Activated naive CD4-positive, alpha-beta T cell treated with anti-CD3 and anti-CD28 coated beads for 36 hours (primary cell): ENCODE measurements at regions of chr5 and their contacts with region 1.

Region 1: GRCh38 chr5:126808521-126808988 is 31.6 kb downstream of the LMNB1 start:
- DNase-seq: no peak
- H3K4me3 Mint-ChIP-seq: no peak overlapping the region
- H3K27ac Mint-ChIP-seq: peak overlapping the region; percentile 98
- H3K4me1 Mint-ChIP-seq: peaks cover 60% of the 10 kb centered on the region
- H3K27me3 Mint-ChIP-seq: no peaks in the 10 kb centered on the region

Region 2: DNA sequence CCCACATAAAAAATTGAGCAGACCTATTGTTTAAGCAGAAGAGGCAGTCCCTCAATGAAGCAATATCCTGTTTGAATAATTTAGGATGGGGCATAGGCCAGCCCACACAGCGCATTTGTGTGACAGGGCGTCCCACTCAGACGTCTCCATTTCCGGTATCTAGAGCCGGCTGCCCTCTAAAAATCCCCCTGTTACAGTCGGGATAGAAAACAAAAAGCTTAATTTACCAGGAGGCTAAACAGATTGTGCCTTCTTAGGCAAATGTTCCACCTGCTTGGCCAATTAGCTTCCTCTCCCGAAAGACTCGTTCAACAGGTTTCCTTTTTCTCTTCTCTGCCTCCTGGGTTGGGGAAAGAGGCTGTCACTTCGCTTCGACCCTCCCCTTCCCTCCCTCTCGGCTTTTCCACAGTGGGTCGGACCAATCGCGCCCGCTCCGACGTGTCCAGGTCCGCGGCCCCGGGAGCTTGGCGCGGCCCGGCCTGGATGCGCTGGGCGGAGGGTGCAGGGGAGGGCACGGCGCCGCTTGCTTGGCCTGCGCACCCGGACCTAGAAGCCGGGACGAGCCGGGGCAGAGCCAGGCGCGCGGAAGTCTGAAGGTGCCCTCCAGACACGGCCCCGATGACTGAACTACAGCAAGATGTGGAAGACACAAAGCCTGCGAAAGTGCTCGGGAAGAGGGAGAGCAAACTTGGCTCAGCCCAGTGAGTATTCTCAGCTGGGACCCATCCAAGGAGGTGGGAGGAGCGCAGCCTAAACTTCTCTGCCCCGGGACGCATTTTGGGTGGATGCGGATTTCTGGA is 385.4 kb before region 1 on chr5 and contains the start of gene GRAMD2B:
- CTCF ChIA-PET with region 1: no interaction called
- intact Hi-C with region 1: loop called (anchors 1 kb)
- DNase-seq: peak; percentile 87
- H3K4me3 Mint-ChIP-seq: peak within 1 kb of the TSS; percentile 81
- H3K27ac Mint-ChIP-seq: peak within 1 kb of the TSS; percentile 88
- H3K4me1 Mint-ChIP-seq: peaks cover 29% of the 10 kb centered on the region
- H3K27me3 Mint-ChIP-seq: no peaks in the 10 kb centered on the region
- total RNA-seq, gene GRAMD2B: 8.7 to 10.8 TPM

Region 3: DNA sequence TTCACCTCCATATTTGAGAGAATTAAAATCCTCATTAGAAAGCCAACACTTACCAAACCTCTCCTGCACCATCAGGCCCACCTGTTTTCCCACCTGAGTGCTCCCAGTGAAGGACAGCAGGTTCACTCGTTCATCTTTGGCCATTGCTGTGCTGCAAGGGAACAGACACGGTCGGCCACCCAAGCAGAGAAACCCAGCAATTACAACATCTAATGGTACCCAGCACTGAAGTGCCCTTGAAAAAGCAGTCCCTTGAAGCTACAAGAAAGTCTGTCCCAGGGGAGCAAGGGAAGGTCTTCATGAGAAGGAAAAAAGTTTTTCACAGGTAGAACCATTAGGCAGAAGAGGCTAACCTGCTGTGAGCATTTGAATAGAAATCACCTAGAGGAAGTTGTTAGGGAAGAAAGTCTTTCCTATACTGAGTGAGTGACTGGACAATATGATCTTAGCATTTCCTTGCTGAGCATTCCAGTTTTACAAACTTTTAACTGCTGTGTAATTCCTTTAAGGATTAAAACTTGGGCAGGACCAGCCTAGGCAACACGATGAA is 240.3 kb before region 1 on chr5:
- CTCF ChIA-PET with region 1: no interaction called
- intact Hi-C with region 1: no loop called
- DNase-seq: no peak
- H3K4me3 Mint-ChIP-seq: no peak overlapping the region
- H3K27ac Mint-ChIP-seq: no peak overlapping the region
- H3K4me1 Mint-ChIP-seq: no peaks in the 10 kb centered on the region
- H3K27me3 Mint-ChIP-seq: no peaks in the 10 kb centered on the region

Region 4: GRCh38 chr5:126676195-126676624 is 132.3 kb before region 1 on chr5:
- CTCF ChIA-PET with region 1: interaction called, 29 read pairs
- intact Hi-C with region 1: loop called (anchors 1 kb)
- DNase-seq: peak; percentile 85
- H3K4me3 Mint-ChIP-seq: no peak overlapping the region
- H3K27ac Mint-ChIP-seq: peak overlapping the region; percentile 67
- H3K4me1 Mint-ChIP-seq: peaks cover 4% of the 10 kb centered on the region
- H3K27me3 Mint-ChIP-seq: no peaks in the 10 kb centered on the region

Region 5: DNA sequence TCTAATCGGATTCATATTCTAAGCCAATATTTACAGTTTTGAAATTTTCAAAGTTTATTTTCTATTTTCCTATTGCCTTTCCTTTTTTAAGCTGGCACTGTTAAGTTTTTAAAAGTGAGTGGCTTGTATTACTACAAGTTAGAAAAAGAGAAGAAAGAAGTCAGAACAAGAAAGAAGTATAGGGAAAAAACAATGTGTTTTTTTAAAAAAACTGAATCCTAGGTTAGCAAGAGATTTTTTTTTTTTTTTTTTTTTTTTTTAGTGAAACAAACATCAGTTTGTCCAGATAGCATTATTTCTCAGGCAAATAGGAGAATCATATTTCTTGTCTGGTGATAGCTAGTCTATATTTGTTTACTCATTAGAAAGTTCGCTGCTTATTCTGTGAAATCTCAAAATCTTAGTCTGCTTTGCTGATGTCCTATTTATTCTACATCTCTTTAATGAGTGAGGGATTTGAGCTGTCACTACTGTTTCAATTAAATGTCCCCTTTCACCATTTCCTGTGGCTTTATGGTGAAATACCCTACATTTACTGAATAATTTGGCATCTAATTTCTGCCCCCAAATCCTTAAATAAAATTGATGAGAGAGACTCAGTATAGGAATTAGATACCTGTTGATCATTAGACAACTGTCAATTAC is 50.7 kb before region 1 on chr5:
- CTCF ChIA-PET with region 1: interaction called, 3 read pairs
- intact Hi-C with region 1: loop called (anchors 1 kb)
- DNase-seq: no peak
- H3K4me3 Mint-ChIP-seq: no peak overlapping the region
- H3K27ac Mint-ChIP-seq: peak overlapping the region; percentile 54
- H3K4me1 Mint-ChIP-seq: peaks cover 44% of the 10 kb centered on the region
- H3K27me3 Mint-ChIP-seq: no peaks in the 10 kb centered on the region

Region 6: GRCh38 chr5:126972062-126972895 is 163.7 kb after region 1 on chr5:
- CTCF ChIA-PET with region 1: no interaction called
- intact Hi-C with region 1: loop called (anchors 1 kb)
- DNase-seq: peak; percentile 45
- H3K4me3 Mint-ChIP-seq: peak overlapping the region; percentile 70
- H3K27ac Mint-ChIP-seq: peak overlapping the region; percentile 94
- H3K4me1 Mint-ChIP-seq: peaks cover 37% of the 10 kb centered on the region
- H3K27me3 Mint-ChIP-seq: no peaks in the 10 kb centered on the region

Region 7: GRCh38 chr5:126994485-126994884 is 185.9 kb after region 1 on chr5:
- CTCF ChIA-PET with region 1: no interaction called
- intact Hi-C with region 1: loop called (anchors 1 kb)
- DNase-seq: peak; percentile 50
- H3K4me3 Mint-ChIP-seq: no peak overlapping the region
- H3K27ac Mint-ChIP-seq: no peak overlapping the region
- H3K4me1 Mint-ChIP-seq: peaks cover 44% of the 10 kb centered on the region
- H3K27me3 Mint-ChIP-seq: no peaks in the 10 kb centered on the region

Region 8: GRCh38 chr5:127072861-127073846 is 264.6 kb after region 1 on chr5 and contains the start of gene C5orf63:
- CTCF ChIA-PET with region 1: interaction called, 3 read pairs
- intact Hi-C with region 1: loop called (anchors 1 kb)
- DNase-seq: peak; percentile 82
- H3K4me3 Mint-ChIP-seq: peak within 1 kb of the TSS; percentile 92
- H3K27ac Mint-ChIP-seq: peak within 1 kb of the TSS; percentile 90
- H3K4me1 Mint-ChIP-seq: peaks cover 21% of the 10 kb centered on the region
- H3K27me3 Mint-ChIP-seq: no peaks in the 10 kb centered on the region
- total RNA-seq, gene C5orf63: 9.4 to 11.6 TPM

Region 9: GRCh38 chr5:127176769-127177168 is 368.2 kb after region 1 on chr5:
- CTCF ChIA-PET with region 1: no interaction called
- intact Hi-C with region 1: no loop called
- DNase-seq: no peak
- H3K4me3 Mint-ChIP-seq: no peak overlapping the region
- H3K27ac Mint-ChIP-seq: no peak overlapping the region
- H3K4me1 Mint-ChIP-seq: no peaks in the 10 kb centered on the region
- H3K27me3 Mint-ChIP-seq: peaks cover 5% of the 10 kb centered on the region